Caco-2 (cell line): ENCODE measurements at regions of chr11 and their contacts with region 1.

Region 1: GRCh38 chr11:69287968-69288882 is 5.7 kb upstream of the MYEOV start:
- DNase-seq: peak; percentile 98 to 99
- H3K4me3 ChIP-seq: peak overlapping the region; percentile 15
- H3K4me3 Mint-ChIP-seq: peak overlapping the region; percentile 65
- H3K27ac Mint-ChIP-seq: peak overlapping the region; percentile 48
- H3K4me1 ChIP-seq: peaks cover 53% of the 10 kb centered on the region
- H3K4me1 Mint-ChIP-seq: peaks cover 37% of the 10 kb centered on the region
- H3K27me3 ChIP-seq: no peaks in the 10 kb centered on the region
- H3K27me3 Mint-ChIP-seq: no peaks in the 10 kb centered on the region
- CTCF ChIP-seq: no peak

Region 2: DNA sequence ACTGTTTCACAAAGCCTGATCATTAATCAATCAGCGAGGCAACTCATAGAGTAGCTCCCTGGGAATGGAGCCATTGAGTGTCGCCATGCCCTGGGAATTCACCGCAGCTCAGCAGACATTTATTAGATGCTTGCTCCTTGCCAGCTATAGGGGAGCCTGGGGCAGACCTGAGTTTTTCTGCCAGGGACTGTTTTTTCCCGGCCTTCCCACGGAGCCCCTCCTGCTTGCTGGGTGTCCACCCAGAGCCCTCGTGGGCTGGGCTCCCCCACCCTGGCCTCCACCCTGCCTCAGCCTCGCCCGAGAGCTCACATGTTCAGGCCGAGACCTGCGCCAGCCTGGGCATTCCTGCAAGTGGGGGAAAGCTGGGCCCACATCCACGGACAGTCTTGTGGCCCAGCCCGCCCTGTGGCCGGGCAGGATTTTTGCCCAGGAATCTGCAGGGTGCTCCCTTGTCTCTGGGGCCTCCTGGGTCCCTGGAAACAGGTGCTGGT is 67.6 kb before region 1 on chr11:
- CTCF ChIA-PET with region 1: no interaction called
- POLR2A ChIA-PET with region 1: no interaction called
- intact Hi-C with region 1: no loop called
- DNase-seq: peak in 1 of 2 experiments; percentile 32
- H3K4me3 ChIP-seq: no peak overlapping the region
- H3K4me3 Mint-ChIP-seq: no peak overlapping the region
- H3K27ac Mint-ChIP-seq: no peak overlapping the region
- H3K4me1 ChIP-seq: no peaks in the 10 kb centered on the region
- H3K4me1 Mint-ChIP-seq: no peaks in the 10 kb centered on the region
- H3K27me3 ChIP-seq: no peaks in the 10 kb centered on the region
- H3K27me3 Mint-ChIP-seq: peaks cover 16% of the 10 kb centered on the region
- CTCF ChIP-seq: no peak

Region 3: DNA sequence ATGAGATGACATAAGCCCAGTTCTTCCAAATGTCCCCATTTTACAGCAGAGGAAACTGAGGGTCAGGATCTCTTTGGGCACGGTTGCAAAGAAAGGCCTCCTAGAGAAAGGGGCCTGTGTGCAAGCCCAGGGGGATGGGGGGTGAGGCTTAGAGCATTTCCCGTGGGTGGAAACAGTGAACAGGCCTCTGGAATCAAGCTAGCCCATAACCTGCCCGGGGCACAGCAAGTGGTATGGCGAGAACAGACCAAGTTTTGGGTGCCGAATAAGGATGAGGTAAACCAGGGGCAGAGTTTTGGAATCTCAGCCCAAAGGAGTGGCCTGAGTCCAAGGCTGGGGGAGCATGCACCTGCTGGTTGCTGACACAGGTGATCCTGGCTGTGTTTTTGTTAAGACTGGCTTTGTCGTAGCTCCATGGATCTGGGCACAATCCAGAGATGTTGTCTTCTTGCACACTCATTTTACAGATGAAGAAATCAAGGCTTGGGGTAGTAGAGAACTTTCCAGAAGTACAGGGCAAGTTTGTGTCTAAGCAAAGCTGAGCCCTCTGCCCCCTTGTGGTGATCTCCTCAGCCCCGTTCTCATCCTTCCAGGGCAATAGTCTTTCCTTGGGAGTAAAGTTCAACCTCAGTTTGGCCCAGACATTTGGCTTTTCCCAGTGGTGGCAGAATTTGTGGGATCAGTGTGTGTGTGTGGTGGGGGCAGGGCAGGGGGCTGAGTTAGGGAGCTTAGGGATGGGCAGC is 47.7 kb before region 1 on chr11:
- CTCF ChIA-PET with region 1: no interaction called
- POLR2A ChIA-PET with region 1: no interaction called
- intact Hi-C with region 1: loop called (anchors 1 kb)
- DNase-seq: peak; percentile 52 to 56
- H3K4me3 ChIP-seq: no peak overlapping the region
- H3K4me3 Mint-ChIP-seq: no peak overlapping the region
- H3K27ac Mint-ChIP-seq: no peak overlapping the region
- H3K4me1 ChIP-seq: no peaks in the 10 kb centered on the region
- H3K4me1 Mint-ChIP-seq: no peaks in the 10 kb centered on the region
- H3K27me3 ChIP-seq: no peaks in the 10 kb centered on the region
- H3K27me3 Mint-ChIP-seq: peaks cover 2% of the 10 kb centered on the region
- CTCF ChIP-seq: peak; percentile 47 to 59

Region 4: DNA sequence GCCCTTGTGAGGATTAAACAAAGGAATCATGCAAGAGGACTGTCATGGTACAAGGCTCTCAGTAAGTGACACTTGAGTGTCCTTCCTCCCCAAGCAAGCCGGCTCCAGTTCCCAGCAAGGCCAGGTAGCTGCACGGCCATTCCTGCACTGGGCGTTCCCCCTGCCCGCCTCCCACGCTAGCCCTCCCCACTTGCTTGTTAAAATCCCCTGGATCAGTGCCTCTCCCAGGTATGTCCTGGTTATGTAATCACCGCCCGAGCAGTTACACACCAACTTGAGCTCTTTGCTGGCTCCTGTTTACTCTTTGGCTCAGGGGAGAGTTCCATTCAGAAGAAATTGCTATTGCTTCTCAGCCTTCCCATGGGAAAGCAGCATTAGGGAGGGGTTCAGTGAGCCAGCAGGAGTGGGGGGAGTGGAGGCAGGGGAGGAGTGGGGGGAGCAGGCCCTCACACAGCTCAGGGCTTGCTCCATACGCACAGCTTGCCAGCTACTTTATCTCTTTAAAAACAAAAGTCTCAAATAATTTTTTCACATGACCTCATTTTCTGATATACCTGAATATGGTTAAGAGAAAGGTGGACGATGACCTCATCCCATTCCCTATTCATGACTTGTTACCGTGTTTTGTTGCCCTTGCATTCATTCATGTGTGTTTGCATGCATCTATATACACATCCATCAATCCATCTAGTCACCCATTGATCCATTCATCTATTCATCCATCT is 13.5 kb before region 1 on chr11:
- CTCF ChIA-PET with region 1: interaction called, 6 read pairs
- POLR2A ChIA-PET with region 1: interaction called, 17 read pairs
- intact Hi-C with region 1: loop called (anchors 1 kb)
- DNase-seq: peak; percentile 96 to 98
- H3K4me3 ChIP-seq: no peak overlapping the region
- H3K4me3 Mint-ChIP-seq: peak overlapping the region; percentile 3
- H3K27ac Mint-ChIP-seq: peak overlapping the region; percentile 5
- H3K4me1 ChIP-seq: peaks cover 51% of the 10 kb centered on the region
- H3K4me1 Mint-ChIP-seq: peaks cover 19% of the 10 kb centered on the region
- H3K27me3 ChIP-seq: no peaks in the 10 kb centered on the region
- H3K27me3 Mint-ChIP-seq: no peaks in the 10 kb centered on the region
- CTCF ChIP-seq: no peak

Region 5: GRCh38 chr11:69382131-69383128 is 94.2 kb after region 1 on chr11:
- CTCF ChIA-PET with region 1: no interaction called
- POLR2A ChIA-PET with region 1: interaction called, 6 read pairs
- intact Hi-C with region 1: loop called (anchors 1 kb)
- DNase-seq: peak; percentile 93 to 94
- H3K4me3 ChIP-seq: peak overlapping the region; percentile 56
- H3K4me3 Mint-ChIP-seq: peak overlapping the region; percentile 82
- H3K27ac Mint-ChIP-seq: peak overlapping the region; percentile 93
- H3K4me1 ChIP-seq: peaks cover 15% of the 10 kb centered on the region
- H3K4me1 Mint-ChIP-seq: peaks cover 15% of the 10 kb centered on the region
- H3K27me3 ChIP-seq: no peaks in the 10 kb centered on the region
- H3K27me3 Mint-ChIP-seq: no peaks in the 10 kb centered on the region
- CTCF ChIP-seq: peak in 1 of 2 experiments; percentile 13